ENCODE measurements at regions of chr21 and their contacts with region 1.

Region 1: GRCh38 chr21:34693192-34693810 is 24.5 kb downstream of the CLIC6 start:
- DNase-seq: peak in 1 of 2 experiments; percentile 55
- H3K4me3 ChIP-seq: no peak overlapping the region
- H3K27ac ChIP-seq: no peak overlapping the region
- H3K4me1 ChIP-seq: peaks cover 0 to 10% (median 4%) of the 10 kb centered on the region in 4 experiments; a peak in 4 of 7 replicates
- H3K27me3 ChIP-seq: no peaks in the 10 kb centered on the region; a peak in 2 of 7 replicates
- CTCF ChIP-seq: peak in 2 of 3 experiments; percentile 69 to 85; a peak in 3 of 4 replicates
- EP300 ChIP-seq: no peak
- POLR2A ChIP-seq: no peak
- RAD21 ChIP-seq: peak; percentile 76 to 78

Region 2: GRCh38 chr21:34707876-34708325 is 14.6 kb after region 1 on chr21:
- CTCF ChIA-PET with region 1: interaction called, 11 read pairs
- POLR2A ChIA-PET with region 1: no interaction called
- DNase-seq: no peak
- H3K4me3 ChIP-seq: no peak overlapping the region
- H3K27ac ChIP-seq: no peak overlapping the region
- H3K4me1 ChIP-seq: no peaks in the 10 kb centered on the region; a peak in 1 of 7 replicates
- H3K27me3 ChIP-seq: no peaks in the 10 kb centered on the region
- CTCF ChIP-seq: no peak
- EP300 ChIP-seq: no peak
- POLR2A ChIP-seq: no peak
- RAD21 ChIP-seq: no peak

Region 3: DNA sequence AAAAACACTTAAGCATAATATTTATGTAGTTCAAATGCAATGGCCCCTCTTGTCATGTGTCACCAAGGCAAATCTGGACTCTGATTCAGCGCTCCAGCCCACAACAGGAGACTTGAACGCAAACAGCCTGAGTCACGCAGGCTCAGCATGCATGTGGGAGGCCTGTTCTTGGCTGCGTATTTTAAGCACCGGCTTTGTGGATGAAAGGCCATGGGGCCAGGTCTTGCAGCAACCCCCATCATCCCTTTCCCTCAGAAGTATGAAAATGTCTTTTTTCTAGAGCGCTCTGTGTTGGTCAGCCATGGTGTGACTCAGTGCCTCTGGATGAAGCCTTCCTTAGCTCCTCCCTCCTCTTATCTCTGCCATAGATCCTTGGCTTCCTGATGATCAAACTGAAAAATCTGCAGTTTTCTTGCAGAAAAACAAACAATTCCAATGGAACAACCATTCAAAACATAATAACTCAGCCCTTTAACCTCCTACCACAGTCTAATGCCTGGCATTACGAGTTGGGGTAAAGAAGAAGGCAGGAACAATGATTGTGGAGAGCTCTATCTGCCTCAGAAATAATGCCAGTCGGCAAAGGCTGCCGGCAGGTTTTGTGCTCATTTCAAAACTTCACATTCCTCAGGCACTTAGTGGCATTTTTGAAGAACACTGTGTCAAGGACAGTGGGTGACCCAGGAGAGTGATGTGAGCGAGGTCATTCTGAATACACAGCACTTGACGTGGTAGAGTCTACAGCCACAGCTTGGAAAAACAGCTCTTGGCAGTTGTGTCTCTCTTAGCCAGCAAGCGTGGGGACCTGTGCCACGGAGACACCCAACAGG is 143.0 kb after region 1 on chr21:
- CTCF ChIA-PET with region 1: no interaction called
- POLR2A ChIA-PET with region 1: no interaction called
- DNase-seq: no peak
- H3K4me3 ChIP-seq: no peak overlapping the region
- H3K27ac ChIP-seq: no peak overlapping the region
- H3K4me1 ChIP-seq: peaks cover 7 to 28% (median 13%) of the 10 kb centered on the region in 4 experiments
- H3K27me3 ChIP-seq: no peaks in the 10 kb centered on the region
- CTCF ChIP-seq: no peak
- EP300 ChIP-seq: no peak
- POLR2A ChIP-seq: no peak
- RAD21 ChIP-seq: no peak

Measured in H1 (cell line).